CD14-positive monocyte (primary cell): ENCODE measurements at regions of chr21 and their contacts with region 1.

Region 1: GRCh38 chr21:42145569-42146272 is 73.2 kb upstream of the ABCG1 start:
- DNase-seq: peak; percentile 60 to 76 (median 64)
- H3K4me3 ChIP-seq: no peak overlapping the region
- H3K4me3 Mint-ChIP-seq: no peak overlapping the region
- H3K27ac ChIP-seq: no peak overlapping the region
- H3K27ac Mint-ChIP-seq: no peak overlapping the region
- H3K4me1 ChIP-seq: peaks cover 30% of the 10 kb centered on the region in 2 donors
- H3K4me1 Mint-ChIP-seq: peaks cover 34% of the 10 kb centered on the region
- H3K27me3 ChIP-seq: no peaks in the 10 kb centered on the region
- H3K27me3 Mint-ChIP-seq: peaks cover 3 to 11% (median 7%) of the 10 kb centered on the region in 3 donors
- CTCF ChIP-seq: peak; percentile 90

Region 2: DNA sequence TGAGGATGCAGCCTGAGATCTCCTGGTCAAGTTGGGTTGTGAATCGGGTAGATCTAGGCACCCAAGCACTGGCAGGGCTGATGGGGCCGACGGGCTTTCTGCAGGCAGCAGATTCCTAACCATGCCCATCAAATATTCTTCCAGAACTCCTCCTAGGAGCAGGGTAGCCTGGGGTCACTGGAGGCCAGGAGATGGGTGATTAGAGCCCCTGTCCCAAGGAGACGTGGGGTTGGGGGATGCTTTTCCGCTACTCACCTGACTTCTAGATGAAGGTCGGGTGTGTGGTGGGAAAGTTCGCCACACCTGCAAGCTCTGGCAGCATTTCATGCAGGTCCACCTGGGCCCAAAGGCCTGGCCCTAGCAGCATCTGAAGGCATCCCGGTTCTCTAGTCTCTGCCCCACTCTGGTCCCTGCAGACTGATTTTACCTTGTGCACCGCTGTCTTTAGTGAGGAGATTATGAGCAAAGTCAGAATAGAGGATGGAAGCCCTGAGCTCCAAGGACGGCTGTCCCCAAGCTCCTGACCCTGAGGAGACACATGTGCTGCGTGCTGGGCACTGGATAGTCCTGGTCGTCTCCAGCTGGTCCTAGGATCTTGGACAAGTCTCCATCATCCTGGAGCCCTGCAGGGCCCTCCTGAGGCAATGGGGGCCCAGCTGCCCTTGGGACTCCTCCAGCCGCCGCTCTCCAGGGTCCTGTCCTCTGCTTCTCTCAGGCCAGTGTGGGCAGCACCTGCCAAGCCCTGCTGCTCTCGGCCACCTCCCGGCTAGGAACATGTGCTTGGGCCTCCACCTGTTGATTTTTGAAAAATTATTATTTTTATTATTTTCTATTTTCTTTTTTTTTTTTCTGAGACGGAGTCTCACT is 170.1 kb before region 1 on chr21:
- intact Hi-C with region 1: no loop called
- DNase-seq: no peak
- H3K4me3 ChIP-seq: no peak overlapping the region
- H3K4me3 Mint-ChIP-seq: no peak overlapping the region
- H3K27ac ChIP-seq: no peak overlapping the region
- H3K27ac Mint-ChIP-seq: no peak overlapping the region
- H3K4me1 ChIP-seq: peaks cover 8 to 11% of the 10 kb centered on the region in 2 donors
- H3K4me1 Mint-ChIP-seq: peaks cover 10% of the 10 kb centered on the region
- H3K27me3 ChIP-seq: no peaks in the 10 kb centered on the region
- H3K27me3 Mint-ChIP-seq: peaks cover 0 to 2% (median 2%) of the 10 kb centered on the region in 3 donors
- CTCF ChIP-seq: no peak

Region 3: GRCh38 chr21:42258153-42258884 is 112.6 kb after region 1 on chr21:
- intact Hi-C with region 1: loop called in 1 of 2 experiments (anchors 5 kb)
- DNase-seq: peak; percentile 71 to 84 (median 78)
- H3K4me3 ChIP-seq: no peak overlapping the region
- H3K4me3 Mint-ChIP-seq: peak overlapping the region in 1 of 2 donors; percentile 2
- H3K27ac ChIP-seq: no peak overlapping the region
- H3K27ac Mint-ChIP-seq: peak overlapping the region in 1 of 7 donors; percentile 33
- H3K4me1 ChIP-seq: peaks cover 16 to 24% of the 10 kb centered on the region in 2 donors
- H3K4me1 Mint-ChIP-seq: peaks cover 36% of the 10 kb centered on the region
- H3K27me3 ChIP-seq: no peaks in the 10 kb centered on the region
- H3K27me3 Mint-ChIP-seq: peaks cover 0 to 9% (median 5%) of the 10 kb centered on the region in 3 donors
- CTCF ChIP-seq: peak; percentile 95

Region 4: DNA sequence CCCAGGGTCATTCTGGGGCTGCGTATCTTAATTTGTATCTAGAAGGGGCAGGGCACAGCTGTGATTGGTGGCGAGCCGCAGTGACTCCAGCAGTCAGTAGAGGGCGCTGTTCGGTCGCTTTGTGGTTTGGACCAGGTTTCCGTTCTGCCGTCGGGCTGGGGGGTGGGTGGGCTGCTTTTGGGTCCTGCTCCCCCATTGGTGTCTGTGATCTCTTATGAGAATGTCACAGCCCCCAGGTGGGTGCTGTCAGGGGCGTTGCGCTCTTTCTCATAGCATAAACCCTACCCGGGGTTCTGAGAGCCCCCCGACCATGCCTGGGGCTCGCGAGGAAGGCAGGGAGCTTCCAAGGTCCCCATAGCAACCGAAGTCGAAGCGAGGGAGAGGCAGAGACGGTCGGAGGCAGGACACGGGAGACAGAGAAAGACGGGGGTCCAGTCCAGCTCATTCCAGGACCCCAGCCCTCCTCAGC is 164.1 kb after region 1 on chr21:
- intact Hi-C with region 1: loop called in 1 of 2 experiments (anchors 5 kb)
- DNase-seq: peak; percentile 38 to 60 (median 59)
- H3K4me3 ChIP-seq: no peak overlapping the region
- H3K4me3 Mint-ChIP-seq: no peak overlapping the region
- H3K27ac ChIP-seq: no peak overlapping the region
- H3K27ac Mint-ChIP-seq: no peak overlapping the region
- H3K4me1 ChIP-seq: peaks cover 24 to 28% of the 10 kb centered on the region in 2 donors
- H3K4me1 Mint-ChIP-seq: peaks cover 31% of the 10 kb centered on the region
- H3K27me3 ChIP-seq: no peaks in the 10 kb centered on the region
- H3K27me3 Mint-ChIP-seq: peaks cover 6 to 11% (median 8%) of the 10 kb centered on the region in 3 donors
- CTCF ChIP-seq: peak; percentile 88

Region 5: GRCh38 chr21:42440187-42440792 is 294.6 kb after region 1 on chr21:
- intact Hi-C with region 1: loop called (anchors 5 to 10 kb)
- DNase-seq: no peak
- H3K4me3 ChIP-seq: no peak overlapping the region
- H3K4me3 Mint-ChIP-seq: no peak overlapping the region
- H3K27ac ChIP-seq: no peak overlapping the region
- H3K27ac Mint-ChIP-seq: peak overlapping the region in 1 of 7 donors; percentile 48
- H3K4me1 ChIP-seq: no peaks in the 10 kb centered on the region
- H3K4me1 Mint-ChIP-seq: no peaks in the 10 kb centered on the region
- H3K27me3 ChIP-seq: no peaks in the 10 kb centered on the region
- H3K27me3 Mint-ChIP-seq: no peaks in the 10 kb centered on the region
- CTCF ChIP-seq: no peak

Region 6: GRCh38 chr21:42453509-42454229 is 307.9 kb after region 1 on chr21:
- intact Hi-C with region 1: loop called (anchors 5 to 10 kb)
- DNase-seq: no peak
- H3K4me3 ChIP-seq: no peak overlapping the region
- H3K4me3 Mint-ChIP-seq: peak overlapping the region in 1 of 2 donors; percentile 24
- H3K27ac ChIP-seq: no peak overlapping the region
- H3K27ac Mint-ChIP-seq: no peak overlapping the region
- H3K4me1 ChIP-seq: peaks cover 6 to 8% of the 10 kb centered on the region in 2 donors
- H3K4me1 Mint-ChIP-seq: peaks cover 7% of the 10 kb centered on the region
- H3K27me3 ChIP-seq: no peaks in the 10 kb centered on the region
- H3K27me3 Mint-ChIP-seq: peaks cover 0 to 9% (median 5%) of the 10 kb centered on the region in 3 donors
- CTCF ChIP-seq: no peak

Region 7: DNA sequence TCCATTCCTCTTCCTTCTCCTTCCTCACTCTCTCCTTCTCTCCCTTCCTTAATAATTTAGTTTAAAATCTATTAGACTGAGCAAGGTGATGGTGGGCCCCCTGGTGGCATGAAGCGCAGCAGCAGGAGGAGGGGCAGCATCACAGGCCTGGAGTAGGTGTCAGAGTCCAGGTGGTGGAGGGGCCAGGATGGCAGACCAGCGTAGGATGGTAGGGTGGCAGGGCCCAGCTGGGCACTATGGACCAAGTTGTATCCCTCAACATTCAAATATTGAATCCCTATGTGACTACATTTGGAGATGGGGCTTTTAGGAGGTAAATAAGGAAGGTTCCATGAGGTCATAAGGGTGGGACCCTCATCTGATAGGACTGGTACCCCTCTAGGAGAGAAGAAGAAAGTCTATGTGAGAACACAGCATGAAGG is 672.6 kb after region 1 on chr21:
- intact Hi-C with region 1: loop called in 1 of 2 experiments (anchors 5 kb)
- DNase-seq: peak; percentile 29 to 50 (median 42)
- H3K4me3 ChIP-seq: no peak overlapping the region
- H3K4me3 Mint-ChIP-seq: no peak overlapping the region
- H3K27ac ChIP-seq: no peak overlapping the region
- H3K27ac Mint-ChIP-seq: no peak overlapping the region
- H3K4me1 ChIP-seq: no peaks in the 10 kb centered on the region
- H3K4me1 Mint-ChIP-seq: no peaks in the 10 kb centered on the region
- H3K27me3 ChIP-seq: no peaks in the 10 kb centered on the region
- H3K27me3 Mint-ChIP-seq: peaks cover 0 to 4% (median 2%) of the 10 kb centered on the region in 3 donors
- CTCF ChIP-seq: peak; percentile 95